HEK293 (cell line): ENCODE measurements at regions of chr16 and their contacts with region 1.

Region 1: DNA sequence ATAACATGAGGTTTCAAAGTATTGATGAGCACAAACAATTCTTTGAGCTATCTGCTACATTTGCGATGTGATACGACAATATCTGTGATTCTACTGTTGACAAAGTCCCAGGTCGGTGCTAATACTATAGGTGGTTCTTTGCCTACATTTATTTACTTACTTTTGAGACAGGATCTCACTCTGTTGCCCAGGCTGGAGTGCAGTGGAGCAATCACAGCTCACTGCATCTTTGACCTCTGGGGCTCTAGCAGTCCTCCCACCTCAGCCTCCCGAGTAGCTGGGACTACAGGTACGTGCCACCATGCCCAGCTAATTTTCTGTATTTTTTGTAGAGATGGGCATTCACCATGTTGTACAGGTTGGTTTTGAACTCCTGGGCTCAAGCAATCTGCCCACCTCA is 343.4 kb downstream of the SHISA9 start:
- H3K4me3 ChIP-seq: no peak overlapping the region
- H3K27ac ChIP-seq: no peak overlapping the region
- H3K4me1 ChIP-seq: no peaks in the 10 kb centered on the region
- CTCF ChIP-seq: no peak

Region 2: DNA sequence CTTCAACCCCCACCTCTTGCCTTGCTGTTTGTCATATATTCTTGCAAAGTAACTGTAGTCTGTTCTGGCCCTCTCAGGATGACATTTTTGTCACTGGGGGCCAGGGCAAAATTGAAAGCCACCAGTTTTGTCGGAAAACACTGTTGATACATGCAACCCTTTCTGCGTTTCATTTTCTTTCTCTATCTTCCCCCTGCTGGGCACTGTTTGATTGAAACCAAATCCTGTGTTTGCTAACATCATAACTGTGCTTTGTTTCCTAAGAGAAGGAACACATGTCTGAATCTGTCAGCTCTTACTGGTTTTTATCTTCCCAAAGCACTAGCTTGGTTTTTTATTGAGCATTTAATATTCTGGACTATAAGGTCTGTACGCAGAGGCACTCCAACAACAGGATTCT is 429.4 kb before region 1 on chr16:
- CTCF ChIA-PET with region 1: no interaction called
- POLR2A ChIA-PET with region 1: no interaction called
- H3K4me3 ChIP-seq: no peak overlapping the region
- H3K27ac ChIP-seq: no peak overlapping the region
- H3K4me1 ChIP-seq: no peaks in the 10 kb centered on the region
- CTCF ChIP-seq: no peak

Region 3: GRCh38 chr16:13206606-13207005 is 38.2 kb before region 1 on chr16:
- CTCF ChIA-PET with region 1: no interaction called
- POLR2A ChIA-PET with region 1: no interaction called
- H3K4me3 ChIP-seq: no peak overlapping the region
- H3K27ac ChIP-seq: no peak overlapping the region
- H3K4me1 ChIP-seq: no peaks in the 10 kb centered on the region
- CTCF ChIP-seq: no peak

Region 4: DNA sequence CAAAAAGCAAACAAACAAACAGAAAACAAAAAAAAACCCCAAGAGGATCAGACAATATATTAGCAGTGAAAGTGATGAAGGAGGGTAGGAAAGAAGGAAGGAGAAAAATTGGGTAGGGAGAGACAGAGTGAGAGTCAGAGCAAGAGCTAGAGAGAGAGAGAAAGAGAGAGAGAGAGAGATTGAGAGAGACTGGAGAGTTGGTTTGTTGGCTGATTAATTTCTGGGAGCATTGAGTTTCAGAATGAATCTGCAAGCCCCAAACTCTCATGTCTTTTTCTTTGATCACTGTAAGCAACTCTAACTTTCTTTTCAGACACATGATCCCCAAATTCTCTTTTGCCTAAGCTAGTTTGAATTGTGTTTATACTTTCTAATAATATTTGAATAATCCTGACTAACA is 44.7 kb after region 1 on chr16:
- CTCF ChIA-PET with region 1: no interaction called
- POLR2A ChIA-PET with region 1: interaction called, 11 read pairs
- H3K4me3 ChIP-seq: no peak overlapping the region
- H3K27ac ChIP-seq: no peak overlapping the region
- H3K4me1 ChIP-seq: no peaks in the 10 kb centered on the region
- CTCF ChIP-seq: no peak